ENCODE measurements at regions of chr9 and their contacts with region 1.

Region 1: GRCh38 chr9:37309136-37309535 is 113.4 kb upstream of the GRHPR start:
- ATAC-seq: peak in 1 of 8 experiments; percentile 30
- H3K4me3 ChIP-seq: no peak overlapping the region
- H3K27ac ChIP-seq: no peak overlapping the region
- H3K4me1 ChIP-seq: no peaks in the 10 kb centered on the region

Region 2: GRCh38 chr9:37079370-37080164 is 229.6 kb before region 1 on chr9:
- in situ Hi-C with region 1: no loop called
- ATAC-seq: peak; percentile 90 to 96 (median 94)
- H3K4me3 ChIP-seq: peak overlapping the region; percentile 51 to 94 (median 88)
- H3K27ac ChIP-seq: peak overlapping the region; percentile 89 to 90
- H3K4me1 ChIP-seq: peaks cover 0 to 20% of the 10 kb centered on the region in 2 donors

Region 3: GRCh38 chr9:37104183-37104889 is 204.8 kb before region 1 on chr9:
- in situ Hi-C with region 1: no loop called
- ATAC-seq: peak in 7 of 8 experiments; percentile 62 to 95 (median 82)
- H3K4me3 ChIP-seq: no peak overlapping the region
- H3K27ac ChIP-seq: no peak overlapping the region
- H3K4me1 ChIP-seq: no peaks in the 10 kb centered on the region

Region 4: GRCh38 chr9:37209431-37210386 is 99.4 kb before region 1 on chr9:
- in situ Hi-C with region 1: loop called in 2 of 9 experiments (anchors 25 kb)
- ATAC-seq: peak in 2 of 8 experiments; percentile 38 to 43
- H3K4me3 ChIP-seq: no peak overlapping the region
- H3K27ac ChIP-seq: no peak overlapping the region
- H3K4me1 ChIP-seq: peaks cover 0 to 4% of the 10 kb centered on the region in 2 donors